H1 (cell line): ENCODE measurements at regions of chr1 and their contacts with region 1.

Region 1: GRCh38 chr1:92831762-92832536 is at the start of gene RPL5:
- DNase-seq: peak; percentile 95 to 99
- H3K4me3 ChIP-seq: peak within 1 kb of the TSS; percentile 98 to 100 (median 100)
- H3K27ac ChIP-seq: peak within 1 kb of the TSS; percentile 99
- H3K4me1 ChIP-seq: peaks cover 0 to 6% (median 3%) of the 10 kb centered on the region in 4 experiments; a peak in 4 of 7 replicates
- H3K27me3 ChIP-seq: no peaks in the 10 kb centered on the region; a peak in 1 of 7 replicates
- CTCF ChIP-seq: peak; percentile 86 to 98 (median 94)
- EP300 ChIP-seq: no peak
- POLR2A ChIP-seq: peak; percentile 99
- RAD21 ChIP-seq: peak; percentile 21 to 30; a peak in 2 of 4 replicates
- total RNA-seq, gene RPL5: 1,464 and 1,506 TPM in 2 replicates

Region 2: DNA sequence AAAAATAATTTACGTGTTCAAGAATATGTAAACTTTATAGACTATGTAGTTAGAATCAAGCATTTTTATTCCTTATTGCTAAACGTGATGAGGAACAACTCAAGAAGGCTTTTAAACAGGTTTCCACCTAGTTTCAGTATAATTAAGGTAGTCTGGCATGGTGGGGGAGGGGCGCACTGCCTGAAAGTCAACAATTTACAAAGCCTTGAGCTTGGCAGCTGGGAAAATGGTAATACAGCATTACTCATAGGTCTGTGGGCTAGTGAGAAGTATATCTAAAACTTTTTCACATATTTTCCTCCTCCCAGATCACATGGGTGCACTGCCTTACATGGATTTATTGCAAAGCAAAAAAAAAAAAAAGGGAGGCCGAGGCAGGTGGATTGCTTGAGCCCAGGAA is 122.2 kb before region 1 on chr1:
- CTCF ChIA-PET with region 1: no interaction called
- POLR2A ChIA-PET with region 1: no interaction called
- DNase-seq: no peak
- H3K4me3 ChIP-seq: peak overlapping the region in 1 of 4 experiments; percentile 14; a peak in 1 of 8 replicates
- H3K27ac ChIP-seq: no peak overlapping the region
- H3K4me1 ChIP-seq: peaks cover 0 to 2% (median 2%) of the 10 kb centered on the region in 4 experiments; a peak in 3 of 7 replicates
- H3K27me3 ChIP-seq: no peaks in the 10 kb centered on the region
- CTCF ChIP-seq: no peak
- EP300 ChIP-seq: no peak
- POLR2A ChIP-seq: no peak
- RAD21 ChIP-seq: no peak

Region 3: GRCh38 chr1:92749024-92749634 is 82.8 kb before region 1 on chr1:
- CTCF ChIA-PET with region 1: interaction called, 16 read pairs
- POLR2A ChIA-PET with region 1: interaction called, 5 read pairs
- DNase-seq: no peak
- H3K4me3 ChIP-seq: no peak overlapping the region
- H3K27ac ChIP-seq: no peak overlapping the region
- H3K4me1 ChIP-seq: no peaks in the 10 kb centered on the region
- H3K27me3 ChIP-seq: no peaks in the 10 kb centered on the region
- CTCF ChIP-seq: peak; percentile 15 to 75 (median 72)
- EP300 ChIP-seq: no peak
- POLR2A ChIP-seq: no peak
- RAD21 ChIP-seq: peak; percentile 71 to 75

Region 4: GRCh38 chr1:92792340-92792782 is 39.6 kb before region 1 on chr1:
- CTCF ChIA-PET with region 1: interaction called, 13 read pairs
- POLR2A ChIA-PET with region 1: interaction called, 12 read pairs
- DNase-seq: no peak
- H3K4me3 ChIP-seq: peak overlapping the region in 1 of 4 experiments; percentile 40; a peak in 1 of 8 replicates
- H3K27ac ChIP-seq: no peak overlapping the region
- H3K4me1 ChIP-seq: peaks cover 0 to 9% (median 2%) of the 10 kb centered on the region in 4 experiments; a peak in 3 of 7 replicates
- H3K27me3 ChIP-seq: no peaks in the 10 kb centered on the region
- CTCF ChIP-seq: no peak
- EP300 ChIP-seq: no peak
- POLR2A ChIP-seq: no peak
- RAD21 ChIP-seq: no peak

Region 5: DNA sequence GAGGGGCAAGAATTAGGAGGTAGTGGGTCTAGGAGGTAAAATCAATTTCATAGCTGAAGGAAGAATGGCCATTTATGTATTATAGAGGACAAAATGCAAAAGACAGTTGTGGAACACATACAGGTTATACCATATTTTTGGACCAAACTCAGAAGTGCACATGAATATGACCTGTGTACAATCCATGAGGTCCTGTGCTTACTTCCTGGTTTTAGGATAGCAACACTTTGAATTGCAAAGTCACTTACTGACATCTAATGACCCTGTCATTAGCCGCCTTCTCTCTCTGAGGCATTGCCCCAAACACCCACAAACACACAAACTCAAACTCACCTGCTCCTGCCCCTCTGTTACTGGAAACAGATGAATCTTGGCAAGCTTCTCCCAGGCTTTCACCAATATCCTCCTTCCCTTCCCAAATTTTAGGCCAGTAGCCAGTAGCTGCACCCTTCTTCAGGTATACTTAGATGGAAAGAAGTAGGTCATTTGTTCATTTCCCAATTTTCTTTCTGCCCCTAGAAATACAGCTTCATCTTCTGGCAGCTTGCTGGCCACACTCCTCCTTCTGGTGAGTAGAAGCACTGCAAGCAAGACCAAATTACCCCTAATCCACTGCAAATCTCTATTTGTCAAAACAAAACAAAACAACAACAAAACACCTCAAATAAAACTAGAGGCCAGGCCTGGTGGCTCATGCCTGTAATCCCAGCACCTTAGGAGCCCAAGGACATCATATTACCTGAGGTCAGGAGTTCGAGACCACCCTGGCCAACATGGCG is 13.8 kb before region 1 on chr1:
- CTCF ChIA-PET with region 1: interaction called, 42 read pairs
- POLR2A ChIA-PET with region 1: interaction called, 23 read pairs
- DNase-seq: peak in 1 of 2 experiments; percentile 58
- H3K4me3 ChIP-seq: no peak overlapping the region
- H3K27ac ChIP-seq: no peak overlapping the region
- H3K4me1 ChIP-seq: no peaks in the 10 kb centered on the region
- H3K27me3 ChIP-seq: no peaks in the 10 kb centered on the region
- CTCF ChIP-seq: peak in 2 of 3 experiments; percentile 66 to 69; a peak in 3 of 4 replicates
- EP300 ChIP-seq: no peak
- POLR2A ChIP-seq: no peak
- RAD21 ChIP-seq: peak; percentile 69 to 71

Region 6: DNA sequence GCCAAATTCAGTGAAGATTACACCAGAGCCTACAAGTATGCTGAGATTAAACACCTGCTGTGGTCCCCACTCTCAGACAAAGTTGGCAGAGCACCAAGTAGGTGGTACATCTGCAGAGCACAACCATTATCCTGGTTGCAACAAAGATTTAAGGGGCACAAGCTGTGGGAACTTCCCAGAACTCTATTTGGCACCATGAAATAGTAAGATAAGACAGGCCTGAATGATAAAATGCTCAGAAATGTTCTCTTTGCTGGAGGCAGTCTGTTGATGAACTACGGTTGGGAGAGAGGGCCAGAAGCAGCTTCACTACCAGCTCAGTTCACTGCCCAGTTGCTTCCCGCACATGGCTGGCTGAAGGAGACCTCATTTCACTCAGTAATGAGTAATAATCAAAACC is 19.8 kb after region 1 on chr1:
- CTCF ChIA-PET with region 1: interaction called, 3 read pairs
- POLR2A ChIA-PET with region 1: interaction called, 13 read pairs
- DNase-seq: no peak
- H3K4me3 ChIP-seq: no peak overlapping the region
- H3K27ac ChIP-seq: no peak overlapping the region
- H3K4me1 ChIP-seq: no peaks in the 10 kb centered on the region
- H3K27me3 ChIP-seq: no peaks in the 10 kb centered on the region
- CTCF ChIP-seq: no peak
- EP300 ChIP-seq: no peak
- POLR2A ChIP-seq: no peak
- RAD21 ChIP-seq: no peak

Region 7: GRCh38 chr1:92909321-92909720 is 77.4 kb after region 1 on chr1:
- CTCF ChIA-PET with region 1: no interaction called
- POLR2A ChIA-PET with region 1: no interaction called
- DNase-seq: no peak
- H3K4me3 ChIP-seq: no peak overlapping the region
- H3K27ac ChIP-seq: no peak overlapping the region
- H3K4me1 ChIP-seq: no peaks in the 10 kb centered on the region
- H3K27me3 ChIP-seq: no peaks in the 10 kb centered on the region
- CTCF ChIP-seq: no peak
- EP300 ChIP-seq: no peak
- POLR2A ChIP-seq: no peak
- RAD21 ChIP-seq: no peak

Region 8: DNA sequence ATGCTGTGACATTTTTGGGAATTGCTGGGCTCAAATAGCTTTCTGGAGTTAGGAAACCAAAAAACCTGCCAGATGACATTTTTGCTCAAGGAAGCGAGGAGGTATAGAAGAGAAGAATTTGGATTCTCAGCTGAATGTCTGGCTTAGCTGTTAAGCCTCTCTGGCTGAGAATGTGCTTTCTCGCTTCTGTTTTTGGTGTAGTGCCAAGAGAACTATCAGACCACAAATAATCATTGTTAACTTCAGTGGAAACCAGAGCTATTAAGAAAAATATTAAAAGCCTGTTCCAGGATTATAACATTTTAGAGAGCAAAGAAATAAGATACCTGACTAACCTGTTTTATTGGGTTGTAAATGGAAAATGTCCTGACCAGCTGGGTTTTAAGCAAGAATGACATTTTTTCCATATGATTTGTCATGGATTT is 168.8 kb after region 1 on chr1:
- CTCF ChIA-PET with region 1: interaction called, 3 read pairs
- POLR2A ChIA-PET with region 1: interaction called, 10 read pairs
- DNase-seq: no peak
- H3K4me3 ChIP-seq: peak overlapping the region in 1 of 4 experiments; percentile 20; a peak in 1 of 8 replicates
- H3K27ac ChIP-seq: no peak overlapping the region
- H3K4me1 ChIP-seq: peaks cover 0 to 8% (median 5%) of the 10 kb centered on the region in 4 experiments; a peak in 3 of 7 replicates
- H3K27me3 ChIP-seq: no peaks in the 10 kb centered on the region
- CTCF ChIP-seq: no peak
- EP300 ChIP-seq: no peak
- POLR2A ChIP-seq: no peak
- RAD21 ChIP-seq: no peak